ENCODE measurements at regions of chr12 and their contacts with region 1.

Region 1: DNA sequence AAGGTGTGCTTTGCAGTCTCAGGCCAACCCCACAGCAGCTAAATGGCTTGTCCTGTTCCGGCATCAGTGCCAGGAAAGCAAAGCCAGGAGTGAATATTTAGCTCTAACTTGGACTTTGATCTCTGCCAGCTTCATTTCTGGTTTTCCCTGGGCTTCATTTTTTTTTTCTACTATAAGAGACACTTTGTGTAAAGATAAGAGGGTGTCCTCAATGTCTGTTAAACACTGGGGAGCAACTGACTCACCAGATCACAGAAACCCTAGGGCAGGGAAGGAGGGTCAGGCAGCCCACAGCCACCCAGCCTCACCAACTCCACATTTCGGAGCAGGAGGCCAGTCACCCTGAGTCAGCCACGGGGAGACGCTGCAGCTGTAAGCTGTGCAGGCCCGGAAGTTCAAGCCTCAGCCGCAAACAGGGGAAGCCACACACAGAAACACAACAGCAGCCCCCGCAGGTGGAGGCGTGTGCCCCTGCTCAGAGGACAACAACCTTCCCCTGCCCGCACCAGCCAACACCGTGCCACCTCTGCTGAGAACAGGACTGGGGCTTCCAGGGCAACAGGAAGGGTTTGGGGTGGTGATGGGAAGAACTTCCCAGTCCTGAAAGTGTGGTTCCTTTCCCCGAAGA is 6.3 kb downstream of the TNFRSF1A start:
- DNase-seq: peak; percentile 80
- H3K4me3 Mint-ChIP-seq: no peak overlapping the region
- H3K27ac Mint-ChIP-seq: no peak overlapping the region
- H3K4me1 Mint-ChIP-seq: peaks cover 46% of the 10 kb centered on the region
- H3K27me3 Mint-ChIP-seq: no peaks in the 10 kb centered on the region
- CTCF ChIP-seq: no peak

Region 2: DNA sequence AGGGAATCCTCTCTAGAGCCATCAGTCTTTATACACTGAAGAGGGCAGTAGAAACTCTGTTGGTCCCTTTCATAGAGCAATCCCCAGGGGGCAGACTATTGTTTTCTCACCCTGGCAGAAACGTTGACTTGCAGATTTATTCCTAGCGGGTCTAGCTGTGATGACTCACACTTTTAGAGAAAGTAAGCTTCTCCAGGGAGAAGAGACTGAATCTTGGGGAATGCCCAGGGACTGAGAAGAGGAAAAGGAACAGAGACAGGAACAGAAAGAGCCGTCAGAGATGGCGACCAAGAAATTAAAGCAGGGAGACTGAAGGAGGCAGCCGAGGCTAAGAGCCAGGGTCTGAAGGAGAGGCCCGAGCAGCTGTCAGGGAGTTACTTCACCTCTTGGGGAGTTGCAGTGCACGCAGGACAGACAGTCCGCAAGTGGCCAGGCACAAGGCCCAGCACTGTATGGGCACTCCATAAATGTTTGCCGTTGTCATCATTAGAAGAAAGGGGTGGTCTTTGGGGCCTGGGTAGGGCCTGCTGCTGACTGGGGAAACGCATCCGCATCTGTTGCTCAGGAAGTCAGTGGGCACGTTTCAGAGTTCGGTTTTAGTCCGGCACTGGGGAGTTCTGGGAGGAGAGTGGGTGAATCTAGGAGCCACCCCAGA is 12.1 kb before region 1 on chr12:
- CTCF ChIA-PET with region 1: interaction called, 10 read pairs
- intact Hi-C with region 1: no loop called
- DNase-seq: peak; percentile 58
- H3K4me3 Mint-ChIP-seq: no peak overlapping the region
- H3K27ac Mint-ChIP-seq: peak overlapping the region; percentile 56
- H3K4me1 Mint-ChIP-seq: peaks cover 23% of the 10 kb centered on the region
- H3K27me3 Mint-ChIP-seq: no peaks in the 10 kb centered on the region
- CTCF ChIP-seq: peak; percentile 35

Region 3: DNA sequence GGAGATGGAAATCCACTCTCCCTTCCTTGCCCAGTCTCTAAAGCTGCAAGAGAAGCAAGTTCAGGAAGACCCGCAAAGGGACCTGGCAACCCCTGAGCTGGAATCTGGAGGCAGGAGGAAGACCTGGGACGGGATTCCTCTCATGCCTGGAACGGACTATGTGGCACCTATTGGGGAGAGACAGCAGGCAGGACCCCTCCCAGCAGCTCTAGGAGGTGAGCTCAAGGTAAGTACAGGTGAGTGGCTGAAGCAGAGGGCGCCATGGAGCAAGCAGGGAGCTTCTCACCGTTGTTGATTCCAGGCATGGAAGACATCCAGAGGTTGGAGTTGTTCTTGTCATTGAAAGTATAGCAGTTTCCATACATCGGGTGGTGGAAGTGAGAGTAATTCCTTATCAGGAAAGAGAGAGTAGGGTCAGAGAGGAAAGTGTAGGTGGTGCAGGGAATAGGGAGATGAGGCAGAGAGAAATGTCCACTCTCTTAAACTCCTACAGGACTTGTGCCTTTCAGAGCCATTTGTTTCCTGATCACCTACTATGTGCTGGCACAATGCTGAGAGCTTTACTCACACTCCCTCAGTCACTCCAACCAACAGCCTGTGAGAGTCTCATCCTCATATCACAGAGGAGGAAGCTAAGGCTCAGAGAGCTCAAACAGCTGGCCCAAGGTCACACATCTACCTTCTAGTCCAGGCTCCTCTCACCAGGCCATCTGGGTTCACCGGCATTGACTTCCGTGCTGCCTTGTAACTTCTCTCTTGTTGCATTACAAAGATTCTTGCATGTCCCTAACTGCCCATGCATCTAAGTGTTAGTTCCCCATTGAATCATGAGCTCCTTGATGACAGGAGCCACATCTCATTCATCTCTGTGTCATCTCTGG is 20.2 kb after region 1 on chr12:
- CTCF ChIA-PET with region 1: interaction called, 10 read pairs
- intact Hi-C with region 1: no loop called
- DNase-seq: no peak
- H3K4me3 Mint-ChIP-seq: no peak overlapping the region
- H3K27ac Mint-ChIP-seq: no peak overlapping the region
- H3K4me1 Mint-ChIP-seq: peaks cover 29% of the 10 kb centered on the region
- H3K27me3 Mint-ChIP-seq: no peaks in the 10 kb centered on the region
- CTCF ChIP-seq: no peak

Region 4: DNA sequence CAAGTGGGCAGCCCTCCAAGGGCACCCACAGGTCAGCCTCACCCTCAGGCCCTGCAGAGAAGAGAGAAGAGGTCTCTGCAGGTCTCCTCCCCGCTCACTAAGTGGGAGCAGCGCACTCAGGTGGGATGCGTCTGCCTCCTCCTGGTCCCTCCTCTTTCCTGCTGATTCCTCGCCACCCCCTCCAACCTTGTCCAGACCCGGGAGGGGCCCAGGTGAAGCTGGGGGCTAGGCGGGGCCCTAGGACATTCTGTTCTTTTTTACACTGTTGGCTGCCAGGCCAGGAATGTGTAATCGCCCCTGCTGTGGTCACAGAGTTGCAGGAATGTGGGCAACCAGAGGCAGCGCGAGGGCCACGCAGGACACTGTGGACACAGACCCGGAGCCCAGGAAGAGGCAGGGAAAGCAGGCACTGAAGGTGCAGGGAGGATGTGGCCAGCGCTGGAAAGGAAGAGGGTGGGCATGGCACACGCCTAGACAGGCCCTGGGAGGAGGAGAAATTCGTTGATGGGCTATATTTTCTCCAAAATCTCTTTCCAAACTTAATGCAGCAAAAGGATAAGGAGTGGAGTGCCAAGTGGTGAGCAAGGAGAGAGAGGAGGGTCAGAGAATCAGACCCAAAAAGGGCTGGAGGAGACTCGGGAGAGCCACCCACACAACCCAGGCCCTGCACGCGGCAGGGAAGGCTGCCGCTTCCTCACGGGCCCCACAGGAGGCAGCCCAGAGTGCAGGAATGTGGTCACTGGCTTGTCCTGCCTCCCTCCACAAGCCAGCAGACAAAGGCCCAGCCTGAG is 40.7 kb after region 1 on chr12:
- CTCF ChIA-PET with region 1: interaction called, 18 read pairs
- intact Hi-C with region 1: no loop called
- DNase-seq: peak; percentile 74
- H3K4me3 Mint-ChIP-seq: peak overlapping the region; percentile 67
- H3K27ac Mint-ChIP-seq: peak overlapping the region; percentile 50
- H3K4me1 Mint-ChIP-seq: peaks cover 59% of the 10 kb centered on the region
- H3K27me3 Mint-ChIP-seq: no peaks in the 10 kb centered on the region
- CTCF ChIP-seq: peak; percentile 27

Region 5: GRCh38 chr12:6383572-6384498 is 48.3 kb after region 1 on chr12 and contains the start of gene LTBR:
- CTCF ChIA-PET with region 1: interaction called, 22 read pairs
- intact Hi-C with region 1: no loop called
- DNase-seq: peak; percentile 96
- H3K4me3 Mint-ChIP-seq: peak within 1 kb of the TSS; percentile 93
- H3K27ac Mint-ChIP-seq: peak within 1 kb of the TSS; percentile 90
- H3K4me1 Mint-ChIP-seq: peaks cover 32% of the 10 kb centered on the region
- H3K27me3 Mint-ChIP-seq: no peaks in the 10 kb centered on the region
- CTCF ChIP-seq: no peak
- total RNA-seq, gene LTBR: 165 and 167 TPM in 2 replicates

Region 6: GRCh38 chr12:6443361-6443983 is 107.9 kb after region 1 on chr12:
- CTCF ChIA-PET with region 1: no interaction called
- intact Hi-C with region 1: no loop called
- DNase-seq: no peak
- H3K4me3 Mint-ChIP-seq: no peak overlapping the region
- H3K27ac Mint-ChIP-seq: no peak overlapping the region
- H3K4me1 Mint-ChIP-seq: no peaks in the 10 kb centered on the region
- H3K27me3 Mint-ChIP-seq: no peaks in the 10 kb centered on the region
- CTCF ChIP-seq: no peak

Region 7: GRCh38 chr12:6470375-6471163 is 135.0 kb after region 1 on chr12 and contains the start of gene VAMP1:
- CTCF ChIA-PET with region 1: interaction called, 21 read pairs
- intact Hi-C with region 1: loop called (anchors 5 kb)
- DNase-seq: peak; percentile 98
- H3K4me3 Mint-ChIP-seq: peak within 1 kb of the TSS; percentile 83
- H3K27ac Mint-ChIP-seq: peak within 1 kb of the TSS; percentile 57
- H3K4me1 Mint-ChIP-seq: peaks cover 18% of the 10 kb centered on the region
- H3K27me3 Mint-ChIP-seq: no peaks in the 10 kb centered on the region
- CTCF ChIP-seq: no peak
- total RNA-seq, gene VAMP1: 5.0 and 7.4 TPM in 2 replicates